A549 (cell line): ENCODE measurements at regions of chr18 and their contacts with region 1.

Region 1: GRCh38 chr18:36284671-36285295 is 12.7 kb upstream of the FHOD3 start:
- DNase-seq: peak; percentile 20 to 62
- ATAC-seq: peak in 1 of 2 experiments; percentile 66; a peak in 4 of 6 replicates
- H3K4me3 ChIP-seq: no peak overlapping the region
- H3K27ac ChIP-seq: no peak overlapping the region
- H3K4me1 ChIP-seq: no peaks in the 10 kb centered on the region
- CTCF ChIP-seq: peak; percentile 78
- EP300 ChIP-seq: no peak
- POLR2A ChIP-seq: no peak
- RAD21 ChIP-seq: peak; percentile 83 to 90

Region 2: GRCh38 chr18:35756506-35757117 is 528.2 kb before region 1 on chr18:
- CTCF ChIA-PET with region 1: interaction called, 10 read pairs
- POLR2A ChIA-PET with region 1: no interaction called
- DNase-seq: peak; percentile 16 to 40
- ATAC-seq: peak; percentile 76 to 87; a peak in 5 of 6 replicates
- H3K4me3 ChIP-seq: no peak overlapping the region
- H3K27ac ChIP-seq: no peak overlapping the region
- H3K4me1 ChIP-seq: no peaks in the 10 kb centered on the region
- CTCF ChIP-seq: peak; percentile 73
- EP300 ChIP-seq: no peak
- POLR2A ChIP-seq: no peak
- RAD21 ChIP-seq: peak; percentile 79 to 81

Region 3: DNA sequence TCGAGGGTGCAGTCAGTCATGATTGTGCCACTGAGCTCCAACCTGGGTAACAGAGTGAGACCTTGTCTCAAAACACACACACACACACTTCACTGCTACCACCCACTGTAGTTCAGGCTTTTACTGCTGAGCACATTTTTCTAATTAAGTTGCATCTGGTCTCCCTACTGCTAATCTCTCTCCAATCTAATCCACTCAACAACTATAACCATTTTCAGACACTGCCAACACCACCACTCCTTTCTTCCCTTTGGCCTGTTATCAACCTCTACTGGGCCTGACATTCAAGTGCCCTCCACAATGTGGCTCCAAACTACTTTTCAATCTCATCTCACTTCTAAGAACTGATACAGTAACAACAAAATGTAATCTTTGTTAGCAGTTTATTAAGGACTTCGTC is 267.6 kb before region 1 on chr18:
- CTCF ChIA-PET with region 1: interaction called, 16 read pairs
- POLR2A ChIA-PET with region 1: no interaction called
- DNase-seq: no peak
- ATAC-seq: peak in 1 of 2 experiments; percentile 29; a peak in 1 of 6 replicates
- H3K4me3 ChIP-seq: no peak overlapping the region
- H3K27ac ChIP-seq: no peak overlapping the region
- H3K4me1 ChIP-seq: no peaks in the 10 kb centered on the region
- CTCF ChIP-seq: no peak
- EP300 ChIP-seq: no peak
- POLR2A ChIP-seq: no peak
- RAD21 ChIP-seq: no peak

Region 4: GRCh38 chr18:36095936-36096519 is 188.8 kb before region 1 on chr18:
- CTCF ChIA-PET with region 1: interaction called, 11 read pairs
- POLR2A ChIA-PET with region 1: no interaction called
- DNase-seq: peak; percentile 10 to 69
- ATAC-seq: peak in 1 of 2 experiments; percentile 43; a peak in 1 of 6 replicates
- H3K4me3 ChIP-seq: no peak overlapping the region
- H3K27ac ChIP-seq: no peak overlapping the region
- H3K4me1 ChIP-seq: no peaks in the 10 kb centered on the region
- CTCF ChIP-seq: peak; percentile 66
- EP300 ChIP-seq: no peak
- POLR2A ChIP-seq: no peak
- RAD21 ChIP-seq: peak; percentile 74 to 75

Region 5: DNA sequence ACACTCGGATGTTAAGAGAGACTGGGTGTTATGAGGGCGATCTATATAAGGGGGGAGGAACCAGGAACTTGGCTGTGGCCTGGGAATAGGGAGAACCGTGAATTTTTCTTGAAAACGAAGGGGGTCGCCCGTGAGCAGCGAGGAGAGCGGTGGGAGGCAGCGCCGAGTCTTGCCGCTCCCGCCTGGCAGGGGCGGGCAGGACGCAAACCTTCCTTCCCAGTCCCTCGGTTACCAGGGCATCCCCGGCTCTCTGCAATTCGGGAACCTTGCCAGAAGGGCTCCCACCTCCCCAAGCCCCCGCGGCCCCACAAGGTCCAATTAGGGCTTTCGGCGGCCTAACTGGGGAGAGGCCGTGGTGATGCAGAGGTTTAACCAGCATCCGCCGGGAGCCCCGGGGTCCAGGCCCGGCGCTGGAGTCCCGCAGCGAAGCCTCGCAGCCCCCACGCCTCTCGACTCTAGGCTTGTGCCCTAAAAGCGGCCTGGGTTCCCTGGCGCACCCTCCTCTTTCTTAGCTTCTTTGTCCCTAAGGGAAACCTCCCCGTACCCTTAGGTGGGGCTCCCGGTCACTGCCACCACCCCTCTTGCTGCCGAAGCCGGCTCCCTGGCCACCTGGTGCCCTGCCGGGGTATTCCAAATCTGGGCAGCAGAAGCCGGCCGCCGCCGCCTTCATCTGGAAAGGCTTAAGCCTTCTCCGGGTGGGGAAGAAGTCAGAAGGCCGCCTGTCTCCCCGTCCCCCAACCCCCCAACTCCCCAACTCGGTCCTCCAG is 12.1 kb after region 1 on chr18:
- CTCF ChIA-PET with region 1: interaction called, 14 read pairs
- POLR2A ChIA-PET with region 1: no interaction called
- DNase-seq: peak; percentile 46 to 74
- ATAC-seq: peak; percentile 84 to 90
- H3K4me3 ChIP-seq: peak overlapping the region; percentile 67
- H3K27ac ChIP-seq: peak overlapping the region; percentile 72 to 92
- H3K4me1 ChIP-seq: no peaks in the 10 kb centered on the region
- CTCF ChIP-seq: peak; percentile 46
- EP300 ChIP-seq: no peak
- POLR2A ChIP-seq: no peak
- RAD21 ChIP-seq: peak; percentile 46 to 66

Region 6: GRCh38 chr18:36333414-36333813 is 48.6 kb after region 1 on chr18:
- CTCF ChIA-PET with region 1: no interaction called
- POLR2A ChIA-PET with region 1: no interaction called
- DNase-seq: no peak
- ATAC-seq: no peak
- H3K4me3 ChIP-seq: no peak overlapping the region
- H3K27ac ChIP-seq: no peak overlapping the region
- H3K4me1 ChIP-seq: 0 out of 3 replicates have a peak, but pooled peaks cover 10% of the 10 kb centered on the region
- CTCF ChIP-seq: no peak
- EP300 ChIP-seq: no peak
- POLR2A ChIP-seq: no peak
- RAD21 ChIP-seq: no peak